CD4-positive, alpha-beta memory T cell (primary cell): ENCODE measurements at regions of chr18 and their contacts with region 1.

Region 1: DNA sequence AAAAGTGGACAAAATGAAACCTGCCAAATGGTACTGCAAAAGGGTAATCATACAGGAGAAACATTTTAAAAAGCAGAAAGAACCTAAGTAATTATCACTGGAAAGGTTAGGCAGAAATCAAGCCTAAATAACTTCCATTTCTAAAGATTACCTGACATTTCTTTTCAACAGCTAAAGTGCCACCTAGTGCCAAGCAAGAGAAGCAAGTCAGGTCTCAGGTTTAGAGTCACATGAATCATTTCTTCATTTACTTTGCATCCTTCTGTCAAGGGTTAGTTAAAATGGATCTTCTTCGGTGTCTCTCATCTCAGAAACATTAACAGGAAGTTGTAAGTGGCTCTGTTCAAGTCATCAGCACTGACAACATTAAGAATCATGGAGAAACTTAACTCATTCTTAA is 90.3 kb downstream of the AKAIN1 start:
- DNase-seq: no peak
- H3K4me3 ChIP-seq: no peak overlapping the region
- H3K4me3 Mint-ChIP-seq: no peak overlapping the region
- H3K27ac ChIP-seq: no peak overlapping the region
- H3K27ac Mint-ChIP-seq: no peak overlapping the region
- H3K4me1 ChIP-seq: no peaks in the 10 kb centered on the region
- H3K4me1 Mint-ChIP-seq: no peaks in the 10 kb centered on the region
- H3K27me3 ChIP-seq: no peaks in the 10 kb centered on the region
- H3K27me3 Mint-ChIP-seq: peaks cover 2 to 6% of the 10 kb centered on the region in 2 donors

Region 2: GRCh38 chr18:5424903-5425664 is 318.4 kb after region 1 on chr18:
- CTCF ChIA-PET with region 1: no interaction called
- POLR2A ChIA-PET with region 1: no interaction called
- intact Hi-C with region 1: loop called (anchors 10 kb)
- DNase-seq: peak; percentile 4 to 31 (median 16)
- H3K4me3 ChIP-seq: no peak overlapping the region
- H3K4me3 Mint-ChIP-seq: no peak overlapping the region
- H3K27ac ChIP-seq: no peak overlapping the region
- H3K27ac Mint-ChIP-seq: no peak overlapping the region
- H3K4me1 ChIP-seq: no peaks in the 10 kb centered on the region
- H3K4me1 Mint-ChIP-seq: no peaks in the 10 kb centered on the region
- H3K27me3 ChIP-seq: no peaks in the 10 kb centered on the region
- H3K27me3 Mint-ChIP-seq: peaks cover 1 to 12% of the 10 kb centered on the region in 2 donors